ENCODE measurements at regions of chr12 and their contacts with region 1.

Region 1: GRCh38 chr12:57836442-57837375 is 9.8 kb downstream of the CTDSP2 start:
- H3K4me3 Mint-ChIP-seq: no peak overlapping the region
- H3K27ac Mint-ChIP-seq: peak overlapping the region; percentile 10
- H3K4me1 Mint-ChIP-seq: peaks cover 97% of the 10 kb centered on the region
- H3K27me3 Mint-ChIP-seq: no peaks in the 10 kb centered on the region

Region 2: GRCh38 chr12:57904848-57905811 is 68.4 kb after region 1 on chr12:
- intact Hi-C with region 1: loop called (anchors 1 kb)
- H3K4me3 Mint-ChIP-seq: no peak overlapping the region
- H3K27ac Mint-ChIP-seq: no peak overlapping the region
- H3K4me1 Mint-ChIP-seq: peaks cover 6% of the 10 kb centered on the region
- H3K27me3 Mint-ChIP-seq: peaks cover 8% of the 10 kb centered on the region